Activated CD8-positive, alpha-beta T cell treated with anti-CD3 and anti-CD28 coated beads, Interleukin-2, amount 10 ng/mL, durations not matched to agents 7 days and 5 days (primary cell): ENCODE measurements at regions of chr20 and their contacts with region 1.

Region 1: DNA sequence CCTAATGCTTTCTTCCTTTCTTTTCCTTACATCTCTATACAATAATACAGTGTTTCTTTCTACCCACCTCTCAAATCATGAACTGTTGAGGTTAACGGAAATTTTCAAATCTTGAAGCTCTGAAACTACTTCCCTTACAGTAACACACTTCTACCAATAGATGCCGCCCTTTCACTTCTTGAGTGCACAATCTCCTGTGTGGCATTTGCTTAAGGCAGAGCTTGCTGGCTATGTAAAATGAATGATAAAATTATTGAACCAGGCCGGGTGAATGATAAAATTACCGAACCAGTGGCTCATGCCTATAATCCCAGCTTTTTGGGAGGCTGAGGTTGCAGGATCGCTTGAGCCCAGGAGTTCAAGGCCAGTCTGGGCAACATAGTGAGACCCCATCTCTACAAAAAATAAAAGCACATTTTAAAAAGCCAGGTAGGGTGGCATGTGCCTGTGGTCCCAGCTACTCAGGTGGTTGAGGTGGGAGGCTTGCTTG is 56.8 kb downstream of the KCNS1 start:
- DNase-seq: peak; percentile 67
- ATAC-seq: peak; percentile 83
- H3K4me3 Mint-ChIP-seq: no peak overlapping the region
- H3K27ac Mint-ChIP-seq: peak overlapping the region; percentile 62
- H3K4me1 Mint-ChIP-seq: peaks cover 51% of the 10 kb centered on the region
- H3K27me3 Mint-ChIP-seq: no peaks in the 10 kb centered on the region

Region 2: DNA sequence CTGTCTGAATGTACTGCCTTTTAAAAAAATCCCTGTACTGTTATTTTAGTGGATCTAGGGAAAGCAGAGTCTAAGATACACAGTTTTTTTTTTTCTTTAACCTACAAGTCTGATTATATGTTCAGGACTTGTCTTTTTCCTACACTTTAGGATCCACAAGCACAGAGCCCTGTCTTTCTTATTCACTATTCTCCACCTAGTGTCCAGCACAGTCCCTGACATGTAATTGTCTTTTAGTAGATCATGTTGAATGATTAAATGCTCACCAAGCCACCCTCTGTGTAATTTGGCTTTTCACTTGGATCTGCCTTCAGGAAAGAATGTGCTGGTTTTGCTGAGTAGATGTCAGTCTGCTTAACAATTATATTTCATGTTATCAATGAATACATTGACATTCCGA is 194.4 kb before region 1 on chr20:
- CTCF ChIA-PET with region 1: no interaction called
- POLR2A ChIA-PET with region 1: no interaction called
- DNase-seq: no peak
- ATAC-seq: no peak
- H3K4me3 Mint-ChIP-seq: no peak overlapping the region
- H3K27ac Mint-ChIP-seq: no peak overlapping the region
- H3K4me1 Mint-ChIP-seq: no peaks in the 10 kb centered on the region
- H3K27me3 Mint-ChIP-seq: peaks cover 19% of the 10 kb centered on the region

Region 3: GRCh38 chr20:45011108-45011526 is 33.0 kb before region 1 on chr20:
- CTCF ChIA-PET with region 1: interaction called, 25 read pairs
- POLR2A ChIA-PET with region 1: no interaction called
- DNase-seq: peak; percentile 65
- ATAC-seq: peak; percentile 71
- H3K4me3 Mint-ChIP-seq: no peak overlapping the region
- H3K27ac Mint-ChIP-seq: no peak overlapping the region
- H3K4me1 Mint-ChIP-seq: peaks cover 16% of the 10 kb centered on the region
- H3K27me3 Mint-ChIP-seq: no peaks in the 10 kb centered on the region

Region 4: DNA sequence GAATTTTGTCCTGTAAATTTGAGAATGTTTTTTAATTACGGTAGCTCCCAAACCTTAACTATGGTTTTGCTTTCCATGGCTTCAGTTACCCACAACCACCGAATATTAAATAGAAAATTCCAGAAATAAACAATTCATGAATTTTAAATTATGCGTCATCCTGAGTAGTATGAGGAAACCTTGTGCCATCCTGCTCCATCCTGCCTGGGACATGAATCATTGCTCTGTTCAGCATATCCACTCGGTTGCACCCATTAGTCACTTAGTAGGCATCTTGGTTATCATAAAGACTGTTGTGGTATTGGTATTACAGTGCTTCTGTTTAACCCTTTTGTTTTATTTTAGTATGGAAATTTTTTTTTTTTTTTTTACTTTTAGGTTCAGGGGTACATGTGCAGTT is 17.1 kb after region 1 on chr20:
- CTCF ChIA-PET with region 1: interaction called, 70 read pairs
- POLR2A ChIA-PET with region 1: no interaction called
- DNase-seq: no peak
- ATAC-seq: no peak
- H3K4me3 Mint-ChIP-seq: no peak overlapping the region
- H3K27ac Mint-ChIP-seq: no peak overlapping the region
- H3K4me1 Mint-ChIP-seq: peaks cover 39% of the 10 kb centered on the region
- H3K27me3 Mint-ChIP-seq: no peaks in the 10 kb centered on the region

Region 5: DNA sequence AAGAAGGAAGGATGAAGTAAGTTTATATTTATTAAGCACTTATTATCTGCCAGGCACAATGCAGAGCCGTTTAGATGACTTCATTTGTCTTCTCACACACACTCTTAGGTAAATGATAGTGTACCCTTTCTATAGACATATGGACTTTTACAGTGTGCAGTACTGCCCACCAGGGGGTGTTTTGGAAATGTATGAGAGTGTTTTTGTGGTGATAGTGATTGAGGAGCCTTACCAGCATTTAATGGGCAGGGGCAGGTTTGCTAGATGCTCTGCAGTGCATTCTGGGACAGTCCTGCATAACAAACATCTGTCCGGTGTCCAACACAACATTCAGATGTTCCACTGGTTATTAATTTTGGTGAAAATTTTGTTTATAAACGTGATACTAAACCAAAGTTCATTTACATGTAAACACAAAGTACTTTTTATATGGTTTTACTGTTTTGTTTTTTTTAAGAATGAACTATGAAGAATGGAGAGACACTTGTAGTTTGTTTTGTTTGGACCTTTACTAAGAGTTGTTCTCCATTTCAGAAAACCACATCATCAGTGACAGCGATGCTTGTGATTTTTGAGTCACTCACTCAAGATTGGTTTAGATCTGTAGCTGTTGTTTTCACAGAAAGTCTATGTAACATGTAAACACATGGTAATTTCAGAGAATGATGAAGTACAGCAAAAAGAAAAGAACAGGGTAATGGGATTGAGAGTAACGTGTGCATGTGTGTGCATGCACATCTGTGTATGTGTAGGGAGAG is 36.9 kb after region 1 on chr20:
- CTCF ChIA-PET with region 1: interaction called, 18 read pairs
- POLR2A ChIA-PET with region 1: interaction called, 3 read pairs
- DNase-seq: no peak
- ATAC-seq: no peak
- H3K4me3 Mint-ChIP-seq: no peak overlapping the region
- H3K27ac Mint-ChIP-seq: no peak overlapping the region
- H3K4me1 Mint-ChIP-seq: peaks cover 4% of the 10 kb centered on the region
- H3K27me3 Mint-ChIP-seq: no peaks in the 10 kb centered on the region

Region 6: GRCh38 chr20:45095753-45096371 is 51.7 kb after region 1 on chr20:
- CTCF ChIA-PET with region 1: interaction called, 489 read pairs
- POLR2A ChIA-PET with region 1: interaction called, 5 read pairs
- DNase-seq: peak; percentile 75
- ATAC-seq: peak; percentile 52
- H3K4me3 Mint-ChIP-seq: no peak overlapping the region
- H3K27ac Mint-ChIP-seq: no peak overlapping the region
- H3K4me1 Mint-ChIP-seq: peaks cover 13% of the 10 kb centered on the region
- H3K27me3 Mint-ChIP-seq: peaks cover 34% of the 10 kb centered on the region

Region 7: DNA sequence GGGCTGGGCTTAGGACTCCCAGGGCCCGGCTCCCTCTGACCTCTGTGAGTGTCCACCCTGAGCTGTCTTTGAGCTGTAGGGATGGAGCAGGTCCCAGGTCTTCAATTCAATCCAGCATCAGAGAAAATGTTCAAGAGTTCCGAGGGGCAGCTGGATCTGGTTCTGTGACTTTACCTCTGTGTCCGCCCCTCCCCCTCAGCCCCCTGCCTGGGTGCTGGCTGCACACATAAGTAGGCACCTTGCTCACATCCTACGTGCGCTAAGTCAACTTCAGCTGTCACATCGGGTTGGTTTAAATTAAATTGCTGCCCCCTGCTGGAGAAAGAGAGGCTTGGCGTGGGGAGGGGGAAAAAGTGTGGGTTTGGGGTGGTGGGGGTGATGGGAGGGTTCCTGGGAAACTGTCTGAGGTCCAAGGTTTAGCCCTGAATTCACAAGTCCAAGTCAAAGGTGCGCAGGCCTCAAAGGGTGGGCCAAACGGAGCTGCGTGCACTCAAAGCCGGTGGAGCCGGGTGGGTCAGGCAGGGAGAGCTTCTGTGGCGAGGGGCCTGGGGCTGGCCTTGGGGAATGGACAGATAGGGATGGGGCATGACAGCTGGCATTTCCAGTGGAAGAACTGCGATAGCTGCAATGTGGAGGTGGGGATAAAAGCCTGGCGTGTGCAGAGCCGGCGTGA is 67.8 kb after region 1 on chr20:
- CTCF ChIA-PET with region 1: interaction called, 51 read pairs
- POLR2A ChIA-PET with region 1: no interaction called
- DNase-seq: no peak
- ATAC-seq: no peak
- H3K4me3 Mint-ChIP-seq: no peak overlapping the region
- H3K27ac Mint-ChIP-seq: no peak overlapping the region
- H3K4me1 Mint-ChIP-seq: peaks cover 5% of the 10 kb centered on the region
- H3K27me3 Mint-ChIP-seq: peaks cover 12% of the 10 kb centered on the region